ENCODE measurements at regions of chr12 and their contacts with region 1.

Region 1: DNA sequence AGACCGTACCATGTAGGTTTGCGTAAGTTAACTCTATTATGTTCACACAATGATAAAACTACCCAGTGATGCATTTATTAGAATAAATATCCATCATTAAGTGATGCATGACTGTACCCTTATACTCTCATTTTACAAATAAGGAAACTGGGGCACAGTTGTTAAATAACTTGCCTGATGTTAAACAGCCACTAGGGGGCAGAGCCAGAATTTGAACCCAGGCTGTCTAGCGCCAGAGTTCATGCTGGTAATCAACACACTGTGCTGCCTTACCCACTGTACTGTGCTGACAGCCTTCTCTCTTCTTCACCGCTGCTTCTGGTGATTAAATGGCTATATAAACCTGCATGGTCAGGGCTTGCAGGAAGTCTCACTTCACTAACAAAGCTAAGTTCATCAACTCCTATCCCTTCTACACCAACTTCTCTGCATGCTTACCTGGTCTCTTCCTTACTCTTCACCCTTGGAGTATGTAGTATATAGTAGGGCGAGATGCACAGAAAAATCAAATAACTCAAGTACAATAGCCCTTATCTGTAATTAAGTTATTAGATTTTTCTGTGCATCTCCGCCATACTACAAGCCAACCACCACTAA is 43.6 kb upstream of the APPL2 start:
- DNase-seq: peak; percentile 22
- ATAC-seq: peak; percentile 58
- H3K4me3 ChIP-seq: no peak overlapping the region
- H3K27ac ChIP-seq: no peak overlapping the region
- H3K4me1 ChIP-seq: peaks cover 40% of the 10 kb centered on the region
- H3K27me3 ChIP-seq: no peaks in the 10 kb centered on the region
- CTCF ChIP-seq: peak; percentile 54
- EP300 ChIP-seq: no peak
- POLR2A ChIP-seq: no peak
- RAD21 ChIP-seq: no peak

Region 2: GRCh38 chr12:105369014-105369413 is 89.5 kb after region 1 on chr12:
- CTCF ChIA-PET with region 1: no interaction called
- POLR2A ChIA-PET with region 1: no interaction called
- in situ Hi-C with region 1: no loop called
- intact Hi-C with region 1: no loop called
- DNase-seq: no peak
- ATAC-seq: no peak
- H3K4me3 ChIP-seq: no peak overlapping the region
- H3K27ac ChIP-seq: no peak overlapping the region
- H3K4me1 ChIP-seq: no peaks in the 10 kb centered on the region
- H3K27me3 ChIP-seq: no peaks in the 10 kb centered on the region
- CTCF ChIP-seq: no peak
- EP300 ChIP-seq: no peak
- POLR2A ChIP-seq: no peak
- RAD21 ChIP-seq: no peak

Region 3: DNA sequence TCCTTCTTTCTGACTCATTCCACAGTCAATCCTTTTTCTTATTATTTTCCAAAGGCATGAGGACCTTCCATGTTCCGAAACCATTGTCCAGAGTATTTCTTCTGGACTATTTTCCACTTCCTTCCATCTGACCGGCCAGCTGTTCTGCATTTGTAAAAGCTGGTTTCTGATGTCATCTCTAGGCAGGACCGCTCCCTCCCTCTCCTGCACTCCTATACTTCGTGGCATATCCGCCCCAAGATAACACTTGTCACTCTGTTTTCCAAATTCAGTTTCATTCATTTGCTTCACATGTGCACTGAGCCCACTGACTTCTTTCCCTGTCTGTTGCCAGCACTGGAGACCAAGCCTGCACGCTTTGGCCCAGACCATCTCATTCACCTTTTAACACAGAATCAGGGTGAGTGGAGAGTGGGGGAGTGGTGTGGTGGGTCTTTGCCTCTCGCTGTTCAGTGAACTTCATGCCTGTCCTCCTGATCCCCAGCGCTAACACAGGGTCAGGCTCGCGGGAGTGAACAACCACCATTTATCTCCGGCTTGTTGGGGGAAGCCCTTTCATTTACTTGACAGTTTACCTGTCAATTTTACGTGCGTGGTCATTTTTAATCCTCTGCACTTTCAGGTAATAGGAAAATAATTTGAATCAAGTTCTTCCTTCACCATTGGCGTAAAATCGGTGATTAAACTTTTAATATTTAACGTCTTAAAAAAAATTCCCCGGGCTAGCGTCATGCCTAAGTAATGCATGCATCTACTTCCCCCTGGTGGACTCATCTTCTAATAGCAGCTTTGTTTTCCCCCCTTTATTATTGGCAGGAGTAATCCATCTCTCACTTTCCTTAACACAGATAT is 103.4 kb after region 1 on chr12:
- CTCF ChIA-PET with region 1: interaction called, 6 read pairs
- POLR2A ChIA-PET with region 1: no interaction called
- in situ Hi-C with region 1: loop called (anchors 5 kb)
- intact Hi-C with region 1: loop called (anchors 2 kb)
- DNase-seq: peak; percentile 55
- ATAC-seq: peak; percentile 77
- H3K4me3 ChIP-seq: peak overlapping the region in 2 of 3 experiments; percentile 26 to 50; a peak in 3 of 6 replicates
- H3K27ac ChIP-seq: no peak overlapping the region
- H3K4me1 ChIP-seq: peaks cover 7% of the 10 kb centered on the region
- H3K27me3 ChIP-seq: no peaks in the 10 kb centered on the region
- CTCF ChIP-seq: peak; percentile 78
- EP300 ChIP-seq: no peak
- POLR2A ChIP-seq: no peak
- RAD21 ChIP-seq: peak; percentile 78

Region 4: DNA sequence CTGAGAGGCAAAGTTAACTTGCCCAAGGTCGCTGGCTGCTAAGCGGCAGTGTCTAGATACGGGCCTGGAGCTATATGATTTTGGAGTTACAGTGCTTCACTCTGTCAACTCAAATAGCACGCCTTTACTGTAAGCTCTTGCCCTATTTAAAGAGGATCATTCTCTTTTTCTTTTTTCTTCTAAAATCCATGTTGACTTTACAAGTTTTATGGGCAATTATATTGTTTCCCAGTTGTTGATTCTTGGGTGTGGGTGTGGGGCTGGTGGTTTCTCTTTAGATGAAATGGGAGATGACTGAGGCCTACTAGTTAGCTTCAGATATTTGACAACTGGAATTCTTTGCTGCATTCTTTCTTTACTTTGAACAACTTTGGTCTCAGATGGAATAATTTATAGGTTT is 121.6 kb after region 1 on chr12:
- CTCF ChIA-PET with region 1: no interaction called
- POLR2A ChIA-PET with region 1: no interaction called
- in situ Hi-C with region 1: no loop called
- intact Hi-C with region 1: no loop called
- DNase-seq: no peak
- ATAC-seq: no peak
- H3K4me3 ChIP-seq: no peak overlapping the region
- H3K27ac ChIP-seq: no peak overlapping the region
- H3K4me1 ChIP-seq: peaks cover 12% of the 10 kb centered on the region
- H3K27me3 ChIP-seq: no peaks in the 10 kb centered on the region
- CTCF ChIP-seq: no peak
- EP300 ChIP-seq: no peak
- POLR2A ChIP-seq: no peak
- RAD21 ChIP-seq: no peak

Measured in HepG2 (cell line).